A549 (cell line): ENCODE measurements at regions of chr20 and their contacts with region 1.

Region 1: DNA sequence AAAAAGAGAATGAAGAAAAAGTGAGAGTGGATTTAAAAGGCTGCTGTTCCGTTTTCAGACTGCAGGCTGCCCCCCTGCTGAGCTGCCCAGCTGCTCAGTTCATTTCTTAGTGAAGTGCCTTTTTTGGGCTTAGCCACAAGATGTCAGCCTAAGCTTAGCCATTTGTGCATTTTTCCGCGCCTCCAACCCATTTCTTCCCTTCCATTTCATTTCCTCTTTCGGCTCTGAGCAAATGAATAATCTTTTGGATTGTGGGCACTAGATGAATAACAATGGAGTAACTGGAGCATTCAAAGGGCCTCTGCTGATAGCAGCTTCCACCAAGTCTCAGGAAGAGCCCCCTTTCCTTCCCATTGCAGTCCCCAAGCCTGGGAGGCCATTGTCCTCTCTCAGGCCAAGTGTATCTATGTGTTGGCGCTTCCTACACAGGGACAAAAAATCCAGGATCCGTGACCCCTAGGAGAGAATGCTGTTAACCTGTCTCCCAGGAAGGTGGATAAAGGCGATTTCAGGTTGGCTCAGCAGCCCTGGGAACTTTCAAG is 83.5 kb upstream of the SPTLC3 start:
- DNase-seq: peak; percentile 81 to 88
- ATAC-seq: peak; percentile 85 to 93
- H3K4me3 ChIP-seq: no peak overlapping the region
- H3K27ac ChIP-seq: peak overlapping the region; percentile 19 to 52; a peak in 2 of 6 replicates
- H3K4me1 ChIP-seq: peaks cover 29% of the 10 kb centered on the region
- CTCF ChIP-seq: peak; percentile 99
- EP300 ChIP-seq: no peak
- POLR2A ChIP-seq: no peak
- RAD21 ChIP-seq: peak; percentile 99

Region 2: GRCh38 chr20:12737900-12738299 is 187.4 kb before region 1 on chr20:
- CTCF ChIA-PET with region 1: no interaction called
- POLR2A ChIA-PET with region 1: no interaction called
- DNase-seq: no peak
- ATAC-seq: no peak
- H3K4me3 ChIP-seq: no peak overlapping the region
- H3K27ac ChIP-seq: no peak overlapping the region
- H3K4me1 ChIP-seq: no peaks in the 10 kb centered on the region
- CTCF ChIP-seq: no peak
- EP300 ChIP-seq: no peak
- POLR2A ChIP-seq: no peak
- RAD21 ChIP-seq: no peak

Region 3: GRCh38 chr20:12860619-12861247 is 64.6 kb before region 1 on chr20:
- CTCF ChIA-PET with region 1: no interaction called
- POLR2A ChIA-PET with region 1: no interaction called
- DNase-seq: no peak
- ATAC-seq: no peak
- H3K4me3 ChIP-seq: no peak overlapping the region
- H3K27ac ChIP-seq: no peak overlapping the region
- H3K4me1 ChIP-seq: no peaks in the 10 kb centered on the region
- CTCF ChIP-seq: no peak
- EP300 ChIP-seq: no peak
- POLR2A ChIP-seq: no peak
- RAD21 ChIP-seq: no peak

Region 4: DNA sequence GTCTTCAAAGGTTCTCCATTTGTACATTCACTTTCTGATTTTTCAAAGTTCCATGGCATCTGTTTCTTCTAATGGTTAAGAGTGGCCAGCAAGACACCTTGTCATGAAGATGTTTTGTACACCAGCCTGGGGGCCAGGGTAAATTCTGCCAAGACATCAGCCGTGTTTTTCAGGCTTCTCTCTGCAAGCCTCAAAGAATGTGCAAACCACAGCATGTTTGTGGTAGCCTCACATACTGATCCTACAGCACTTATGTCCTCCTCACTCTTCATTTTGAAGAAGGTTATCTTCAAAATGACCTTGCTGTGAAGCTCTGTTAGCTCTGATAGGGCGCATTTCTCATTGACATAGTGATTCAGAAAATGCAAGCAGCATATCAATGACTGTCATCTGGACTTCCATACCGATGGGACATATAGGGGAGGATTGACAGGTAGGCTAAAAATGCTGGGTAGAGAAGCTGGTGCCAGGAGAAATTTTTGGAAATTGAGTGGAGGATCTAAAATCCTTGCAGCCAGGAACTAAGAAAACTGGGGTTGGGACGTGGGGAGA is 24.2 kb after region 1 on chr20:
- CTCF ChIA-PET with region 1: interaction called, 26 read pairs
- POLR2A ChIA-PET with region 1: no interaction called
- DNase-seq: no peak
- ATAC-seq: no peak
- H3K4me3 ChIP-seq: no peak overlapping the region
- H3K27ac ChIP-seq: no peak overlapping the region
- H3K4me1 ChIP-seq: peaks cover 16% of the 10 kb centered on the region; the same call in 2 of the 3 replicates
- CTCF ChIP-seq: no peak
- EP300 ChIP-seq: no peak
- POLR2A ChIP-seq: no peak
- RAD21 ChIP-seq: no peak

Region 5: DNA sequence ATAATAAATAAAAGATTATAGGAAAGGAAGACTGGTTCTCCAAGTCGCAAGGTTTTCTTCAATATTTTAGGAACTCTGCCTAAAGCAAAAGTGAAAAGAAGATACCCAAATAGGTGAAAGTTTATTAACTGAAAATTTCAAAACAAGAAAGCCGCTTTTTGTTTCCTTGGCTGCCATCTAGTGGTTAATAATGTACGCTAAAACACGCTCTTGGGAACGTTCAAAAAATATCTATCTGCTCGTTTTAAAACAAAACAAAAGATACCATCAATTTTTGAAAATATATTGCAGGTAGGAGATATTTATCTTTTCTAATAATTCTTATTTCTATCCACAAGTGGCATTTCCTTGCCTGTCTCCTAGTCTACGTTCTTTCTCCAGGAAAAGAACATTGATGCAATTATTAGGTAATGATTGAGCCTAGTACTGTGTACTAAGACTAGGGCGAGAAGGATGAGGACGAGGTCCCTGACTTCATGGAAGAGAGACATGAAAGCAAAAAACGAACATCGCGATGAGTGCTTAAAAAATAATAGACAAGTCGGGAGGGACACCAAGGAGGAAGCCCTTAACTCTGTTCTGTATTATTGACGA is 180.7 kb after region 1 on chr20:
- CTCF ChIA-PET with region 1: interaction called, 77 read pairs
- POLR2A ChIA-PET with region 1: no interaction called
- DNase-seq: peak; percentile 26 to 43
- ATAC-seq: peak in 1 of 2 experiments; percentile 72; a peak in 3 of 6 replicates
- H3K4me3 ChIP-seq: no peak overlapping the region
- H3K27ac ChIP-seq: no peak overlapping the region
- H3K4me1 ChIP-seq: no peaks in the 10 kb centered on the region
- CTCF ChIP-seq: peak; percentile 96
- EP300 ChIP-seq: no peak
- POLR2A ChIP-seq: no peak
- RAD21 ChIP-seq: peak; percentile 92 to 97

Region 6: GRCh38 chr20:13119583-13119982 is 194.3 kb after region 1 on chr20:
- CTCF ChIA-PET with region 1: interaction called, 16 read pairs
- POLR2A ChIA-PET with region 1: no interaction called
- DNase-seq: peak; percentile 29 to 70
- ATAC-seq: peak; percentile 86 to 97
- H3K4me3 ChIP-seq: no peak overlapping the region
- H3K27ac ChIP-seq: no peak overlapping the region
- H3K4me1 ChIP-seq: no peaks in the 10 kb centered on the region
- CTCF ChIP-seq: peak; percentile 94
- EP300 ChIP-seq: no peak
- POLR2A ChIP-seq: no peak
- RAD21 ChIP-seq: peak; percentile 95 to 98